Activated CD8-positive, alpha-beta memory T cell treated with anti-CD3 and anti-CD28 coated beads, Interleukin-2, amount 10 ng/mL, durations not matched to agents 7 days and 5 days (primary cell): ENCODE measurements at regions of chr2 and their contacts with region 1.

Region 1: DNA sequence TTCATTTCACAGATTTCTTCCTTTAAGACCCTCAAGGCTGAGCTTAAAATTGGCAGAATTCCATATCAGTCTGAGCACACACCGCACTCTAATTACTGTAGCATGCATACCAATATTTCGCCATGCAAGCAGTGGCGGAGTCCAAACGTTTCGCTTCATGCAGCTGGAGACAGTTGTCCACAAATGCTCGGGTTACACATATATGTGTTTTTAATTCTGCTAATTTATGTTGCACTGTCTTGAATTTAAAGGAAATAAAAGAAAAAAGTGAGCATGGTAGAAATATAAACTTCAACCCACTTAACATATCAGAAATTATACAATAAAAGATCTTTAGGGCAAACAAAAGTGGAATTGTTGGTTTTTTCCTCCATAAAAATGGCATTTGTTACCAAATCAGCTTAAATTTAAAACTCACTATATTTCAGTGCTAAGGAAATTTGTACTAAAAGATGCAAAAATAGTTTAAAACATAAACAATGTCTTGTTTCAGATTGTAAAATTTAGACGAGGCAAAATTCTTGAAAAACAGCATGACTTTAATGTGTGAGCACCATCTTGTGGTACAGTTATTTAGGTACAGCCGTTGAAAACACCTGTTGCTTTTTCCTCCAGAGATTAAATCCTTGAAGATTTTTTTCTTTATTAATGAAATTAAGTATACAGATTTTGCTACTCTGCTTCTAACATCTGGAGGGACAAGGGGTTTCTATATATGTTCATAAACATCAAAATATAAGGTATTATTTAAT is 24.1 kb upstream of the KANSL1L start:
- DNase-seq: no peak
- ATAC-seq: no peak
- H3K4me3 Mint-ChIP-seq: no peak overlapping the region
- H3K27ac Mint-ChIP-seq: no peak overlapping the region
- H3K4me1 Mint-ChIP-seq: peaks cover 4% of the 10 kb centered on the region
- H3K27me3 Mint-ChIP-seq: peaks cover 8% of the 10 kb centered on the region

Region 2: GRCh38 chr2:209977386-209978239 is 217.7 kb before region 1 on chr2:
- CTCF ChIA-PET with region 1: interaction called, 14 read pairs
- DNase-seq: no peak
- ATAC-seq: no peak
- H3K4me3 Mint-ChIP-seq: no peak overlapping the region
- H3K27ac Mint-ChIP-seq: no peak overlapping the region
- H3K4me1 Mint-ChIP-seq: no peaks in the 10 kb centered on the region
- H3K27me3 Mint-ChIP-seq: peaks cover 7% of the 10 kb centered on the region